ENCODE measurements at regions of chr6 and their contacts with region 1.

Region 1: DNA sequence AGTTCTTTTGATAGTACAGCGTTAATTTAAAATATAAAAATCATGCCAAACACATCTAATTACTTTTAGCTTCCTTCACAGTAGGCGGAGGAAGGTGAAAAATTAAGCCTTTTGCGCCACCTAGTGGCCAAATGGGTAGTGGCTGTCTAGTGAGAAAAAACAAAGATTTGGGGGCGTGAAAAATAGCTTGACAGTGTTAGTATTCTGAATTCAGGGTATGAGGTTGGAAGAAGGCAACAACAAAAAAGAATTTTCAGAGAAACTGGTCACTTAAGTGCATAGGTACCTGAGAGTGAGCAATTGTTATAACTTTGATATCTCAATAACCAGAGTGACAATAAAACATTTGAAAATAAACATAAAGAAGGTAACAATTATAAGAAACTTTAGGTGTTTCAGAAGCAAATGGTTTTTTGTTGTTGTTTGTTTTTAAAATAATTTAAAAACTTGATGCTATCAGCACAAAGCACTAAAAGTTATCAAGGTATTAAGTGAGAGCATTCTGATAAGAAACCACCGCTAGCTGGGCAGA is 14.3 kb downstream of the PSMB9 start:
- DNase-seq: peak; percentile 80 to 85 (median 84)
- H3K4me3 ChIP-seq: no peak overlapping the region
- H3K4me3 Mint-ChIP-seq: no peak overlapping the region
- H3K27ac ChIP-seq: no peak overlapping the region
- H3K27ac Mint-ChIP-seq: peak overlapping the region in 1 of 7 donors; percentile 0
- H3K4me1 ChIP-seq: peaks cover 21% of the 10 kb centered on the region
- H3K4me1 Mint-ChIP-seq: peaks cover 19 to 35% (median 28%) of the 10 kb centered on the region in 4 donors
- H3K27me3 ChIP-seq: no peaks in the 10 kb centered on the region
- H3K27me3 Mint-ChIP-seq: peaks cover 0 to 3% of the 10 kb centered on the region in 2 donors

Region 2: DNA sequence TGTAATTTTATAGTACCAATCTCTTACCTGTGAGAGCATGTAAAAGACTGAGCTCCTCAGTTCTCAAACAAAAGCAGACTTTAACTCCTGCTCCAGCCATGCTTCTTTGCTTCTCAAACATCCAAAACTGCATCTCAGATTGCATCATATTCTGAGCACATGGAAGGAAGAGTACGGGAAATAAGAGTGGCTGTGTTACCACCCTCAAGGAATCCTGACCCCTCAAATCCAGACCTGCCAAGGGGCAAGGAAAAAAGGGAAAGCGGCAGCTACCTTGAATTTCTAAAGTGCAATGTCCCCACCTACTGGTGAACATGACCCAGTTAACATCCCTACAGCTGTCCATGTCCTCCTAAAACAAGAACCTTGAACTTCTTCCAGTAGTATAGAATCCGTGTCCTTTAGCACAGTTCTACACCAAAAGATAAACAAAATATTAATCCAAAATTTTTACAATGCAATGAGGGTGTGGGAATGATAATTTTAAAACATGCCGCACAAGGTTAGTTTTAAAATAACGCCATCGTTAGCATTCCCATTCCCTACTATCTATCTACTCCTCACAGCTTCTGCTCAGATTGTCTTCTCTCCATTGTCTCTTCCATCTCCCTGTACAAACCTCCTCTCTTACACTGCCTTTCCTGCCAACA is 167.8 kb before region 1 on chr6:
- CTCF ChIA-PET with region 1: interaction called, 17 read pairs
- POLR2A ChIA-PET with region 1: no interaction called
- intact Hi-C with region 1: loop called (anchors 1 kb)
- DNase-seq: peak in 4 of 5 donors; percentile 29 to 45 (median 38)
- H3K4me3 ChIP-seq: no peak overlapping the region
- H3K4me3 Mint-ChIP-seq: peak overlapping the region in 2 of 8 donors; percentile 35 to 58
- H3K27ac ChIP-seq: no peak overlapping the region
- H3K27ac Mint-ChIP-seq: peak overlapping the region in 1 of 7 donors; percentile 90
- H3K4me1 ChIP-seq: no peaks in the 10 kb centered on the region
- H3K4me1 Mint-ChIP-seq: peaks cover 0 to 4% (median 1%) of the 10 kb centered on the region in 4 donors
- H3K27me3 ChIP-seq: peaks cover 9% of the 10 kb centered on the region
- H3K27me3 Mint-ChIP-seq: peaks cover 24 to 26% of the 10 kb centered on the region in 2 donors

Region 3: DNA sequence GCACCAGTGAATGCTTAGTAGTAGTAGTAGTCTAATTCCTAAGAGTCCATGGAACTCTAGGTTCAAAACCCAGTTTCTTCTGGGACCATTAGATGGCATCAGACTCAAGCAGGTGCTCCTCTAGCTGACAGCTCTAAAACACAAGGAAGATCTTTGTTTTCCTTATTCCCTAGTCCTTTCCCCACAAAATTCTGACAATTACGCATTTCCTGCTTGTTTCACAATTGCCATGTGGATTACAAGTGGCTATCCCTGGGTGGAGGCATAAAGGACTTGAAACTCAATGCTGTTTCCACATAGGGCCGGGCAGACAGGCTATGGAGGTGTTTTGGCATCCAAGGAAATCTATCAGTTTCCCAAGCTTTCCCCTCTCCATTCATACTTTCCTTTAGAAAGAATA is 42.4 kb before region 1 on chr6:
- CTCF ChIA-PET with region 1: interaction called, 55 read pairs
- POLR2A ChIA-PET with region 1: interaction called, 16 read pairs
- intact Hi-C with region 1: loop called (anchors 1 kb)
- DNase-seq: no peak
- H3K4me3 ChIP-seq: no peak overlapping the region
- H3K4me3 Mint-ChIP-seq: no peak overlapping the region
- H3K27ac ChIP-seq: no peak overlapping the region
- H3K27ac Mint-ChIP-seq: peak overlapping the region in 1 of 7 donors; percentile 13
- H3K4me1 ChIP-seq: no peaks in the 10 kb centered on the region
- H3K4me1 Mint-ChIP-seq: peaks cover 0 to 4% (median 0%) of the 10 kb centered on the region in 4 donors
- H3K27me3 ChIP-seq: no peaks in the 10 kb centered on the region
- H3K27me3 Mint-ChIP-seq: no peaks in the 10 kb centered on the region

Region 4: GRCh38 chr6:32853541-32854375 is 14.6 kb before region 1 on chr6 and contains the starts of genes PSMB9 and TAP1:
- CTCF ChIA-PET with region 1: interaction called, 132 read pairs
- POLR2A ChIA-PET with region 1: interaction called, 102 read pairs
- intact Hi-C with region 1: loop called (anchors 1 kb)
- DNase-seq: peak; percentile 94 to 98 (median 96)
- H3K4me3 ChIP-seq: peak within 1 kb of the TSS; percentile 93 to 98
- H3K4me3 Mint-ChIP-seq: peak within 1 kb of the TSS; percentile 98 to 100 (median 99)
- H3K27ac ChIP-seq: peak within 1 kb of the TSS; percentile 100
- H3K27ac Mint-ChIP-seq: peak within 1 kb of the TSS; percentile 99 to 100 (median 100)
- H3K4me1 ChIP-seq: peaks cover 76% of the 10 kb centered on the region
- H3K4me1 Mint-ChIP-seq: peaks cover 57 to 92% (median 66%) of the 10 kb centered on the region in 4 donors
- H3K27me3 ChIP-seq: no peaks in the 10 kb centered on the region
- H3K27me3 Mint-ChIP-seq: no peaks in the 10 kb centered on the region
- total RNA-seq, gene PSMB9: 141 to 144 TPM
- total RNA-seq, gene TAP1: 136 to 141 TPM

Region 5: GRCh38 chr6:32933636-32934085 is 65.3 kb after region 1 on chr6:
- CTCF ChIA-PET with region 1: interaction called, 17 read pairs
- POLR2A ChIA-PET with region 1: no interaction called
- intact Hi-C with region 1: no loop called
- DNase-seq: peak; percentile 67 to 73 (median 70)
- H3K4me3 ChIP-seq: no peak overlapping the region
- H3K4me3 Mint-ChIP-seq: no peak overlapping the region
- H3K27ac ChIP-seq: no peak overlapping the region
- H3K27ac Mint-ChIP-seq: peak overlapping the region in 2 of 7 donors; percentile 4 to 26
- H3K4me1 ChIP-seq: peaks cover 5% of the 10 kb centered on the region
- H3K4me1 Mint-ChIP-seq: peaks cover 0 to 7% (median 5%) of the 10 kb centered on the region in 4 donors
- H3K27me3 ChIP-seq: no peaks in the 10 kb centered on the region
- H3K27me3 Mint-ChIP-seq: no peaks in the 10 kb centered on the region

Measured in CD4-positive, alpha-beta memory T cell (primary cell).